ENCODE measurements at regions of chr20 and their contacts with region 1.

Region 1: DNA sequence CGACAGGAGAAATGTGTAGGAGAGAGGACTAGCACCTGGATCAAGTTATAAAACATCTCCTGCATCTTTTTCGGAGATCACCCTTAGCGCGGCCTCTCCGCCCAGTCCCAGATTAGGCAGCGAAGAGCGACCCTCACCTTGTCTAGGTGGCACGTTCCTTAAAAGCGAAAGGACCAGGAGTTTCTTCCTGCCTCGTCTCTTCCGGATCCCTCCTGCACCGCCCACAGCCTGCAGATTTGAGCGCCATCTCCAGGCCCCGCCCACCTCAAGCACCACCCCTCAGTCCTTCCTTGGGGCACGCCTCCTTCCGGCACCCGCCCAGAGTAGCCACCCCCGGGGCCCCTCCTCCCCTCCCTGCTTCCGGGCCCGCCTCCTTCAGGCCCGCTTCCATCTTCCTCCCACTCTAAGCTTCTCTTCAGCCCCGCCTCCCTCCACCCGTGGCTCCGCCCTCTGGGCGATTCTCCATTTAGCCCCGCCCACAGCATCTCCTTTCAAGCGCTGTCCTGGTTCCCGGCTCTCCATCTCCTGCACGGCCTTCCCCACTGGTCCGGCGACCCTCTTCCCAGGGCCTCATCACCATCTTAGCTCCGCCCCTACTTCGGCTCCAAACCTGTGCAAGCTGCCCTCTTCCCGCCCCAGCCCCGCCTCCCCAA is 662 bp upstream of the RALY start:
- DNase-seq: peak; percentile 99 to 100
- ATAC-seq: peak; percentile 97
- H3K4me3 ChIP-seq: peak overlapping the region; percentile 78 to 82
- H3K27ac ChIP-seq: peak overlapping the region in 1 of 2 donors; percentile 77
- H3K4me1 ChIP-seq: peaks cover 2 to 8% of the 10 kb centered on the region in 2 donors
- H3K27me3 ChIP-seq: no peaks in the 10 kb centered on the region

Region 2: GRCh38 chr20:33318096-33318429 is 675.0 kb before region 1 on chr20:
- intact Hi-C with region 1: no loop called
- DNase-seq: no peak
- ATAC-seq: no peak
- H3K4me3 ChIP-seq: no peak overlapping the region
- H3K27ac ChIP-seq: no peak overlapping the region
- H3K4me1 ChIP-seq: no peaks in the 10 kb centered on the region
- H3K27me3 ChIP-seq: peaks cover 0 to 2% of the 10 kb centered on the region in 2 donors

Region 3: DNA sequence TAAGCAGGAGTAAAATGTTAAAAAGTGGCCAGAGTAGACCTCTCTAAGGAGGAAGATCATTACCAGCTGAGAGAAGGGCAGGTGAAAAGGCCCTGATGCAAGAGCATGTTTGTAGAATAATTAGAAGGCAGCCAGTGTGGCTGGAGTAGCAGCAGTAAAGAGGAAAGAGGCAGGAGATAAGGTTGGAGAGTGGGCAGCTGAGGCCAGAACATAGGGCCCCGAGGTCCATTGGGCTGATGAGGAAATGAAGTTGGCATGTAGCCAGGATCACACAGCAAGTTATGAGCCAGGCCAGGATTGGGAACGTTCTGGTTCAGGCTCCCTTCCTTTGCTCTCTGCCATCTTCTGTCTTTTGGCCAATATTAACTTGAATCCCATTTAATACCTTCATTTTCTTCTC is 52.2 kb after region 1 on chr20:
- intact Hi-C with region 1: loop called in 1 of 2 experiments (anchors 10 kb)
- DNase-seq: peak in 1 of 2 donors; percentile 52
- ATAC-seq: peak; percentile 70
- H3K4me3 ChIP-seq: no peak overlapping the region
- H3K27ac ChIP-seq: no peak overlapping the region
- H3K4me1 ChIP-seq: peaks cover 9 to 19% of the 10 kb centered on the region in 2 donors
- H3K27me3 ChIP-seq: no peaks in the 10 kb centered on the region

Region 4: GRCh38 chr20:34069341-34070078 is 76.5 kb after region 1 on chr20:
- intact Hi-C with region 1: loop called (anchors 5 kb)
- DNase-seq: peak; percentile 62 to 82
- ATAC-seq: peak; percentile 88
- H3K4me3 ChIP-seq: no peak overlapping the region
- H3K27ac ChIP-seq: no peak overlapping the region
- H3K4me1 ChIP-seq: peaks cover 4 to 6% of the 10 kb centered on the region in 2 donors
- H3K27me3 ChIP-seq: no peaks in the 10 kb centered on the region